ENCODE measurements at regions of chr5 and their contacts with region 1.

Region 1: GRCh38 chr5:177454397-177455035 is 7.9 kb downstream of the PRR7 start:
- DNase-seq: peak; percentile 93
- H3K4me3 Mint-ChIP-seq: peak overlapping the region; percentile 70
- H3K27ac Mint-ChIP-seq: no peak overlapping the region
- H3K4me1 Mint-ChIP-seq: peaks cover 6% of the 10 kb centered on the region
- H3K27me3 Mint-ChIP-seq: no peaks in the 10 kb centered on the region
- CTCF ChIP-seq: peak; percentile 98

Region 2: GRCh38 chr5:176157656-176158055 is 1296.9 kb before region 1 on chr5:
- CTCF ChIA-PET with region 1: no interaction called
- POLR2A ChIA-PET with region 1: no interaction called
- intact Hi-C with region 1: no loop called
- DNase-seq: peak; percentile 74
- H3K4me3 Mint-ChIP-seq: no peak overlapping the region
- H3K27ac Mint-ChIP-seq: peak overlapping the region; percentile 40
- H3K4me1 Mint-ChIP-seq: peaks cover 29% of the 10 kb centered on the region
- H3K27me3 Mint-ChIP-seq: no peaks in the 10 kb centered on the region
- CTCF ChIP-seq: no peak

Region 3: DNA sequence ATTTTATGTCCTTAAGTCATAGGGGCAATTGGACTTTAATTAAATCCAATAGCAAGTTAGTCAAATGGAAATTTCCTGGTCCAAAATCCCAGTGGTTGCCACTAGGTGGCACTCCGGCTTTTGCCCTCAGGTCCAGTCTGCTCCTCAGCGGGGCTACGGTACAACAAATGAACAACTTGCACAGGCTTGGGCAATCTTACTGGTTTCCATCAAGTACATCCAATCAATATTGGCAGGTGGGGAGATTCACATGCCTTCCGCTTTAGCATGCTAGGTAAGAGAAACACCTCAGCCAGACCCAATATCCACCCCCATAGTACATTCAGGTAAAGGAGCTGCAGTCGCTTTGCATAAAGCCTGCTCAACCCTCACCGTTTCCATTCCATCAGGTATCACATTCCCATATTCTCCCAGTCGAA is 136.5 kb before region 1 on chr5:
- CTCF ChIA-PET with region 1: interaction called, 15 read pairs
- POLR2A ChIA-PET with region 1: interaction called, 3 read pairs
- intact Hi-C with region 1: loop called (anchors 1 kb)
- DNase-seq: peak; percentile 85
- H3K4me3 Mint-ChIP-seq: no peak overlapping the region
- H3K27ac Mint-ChIP-seq: no peak overlapping the region
- H3K4me1 Mint-ChIP-seq: no peaks in the 10 kb centered on the region
- H3K27me3 Mint-ChIP-seq: no peaks in the 10 kb centered on the region
- CTCF ChIP-seq: peak; percentile 92

Region 4: DNA sequence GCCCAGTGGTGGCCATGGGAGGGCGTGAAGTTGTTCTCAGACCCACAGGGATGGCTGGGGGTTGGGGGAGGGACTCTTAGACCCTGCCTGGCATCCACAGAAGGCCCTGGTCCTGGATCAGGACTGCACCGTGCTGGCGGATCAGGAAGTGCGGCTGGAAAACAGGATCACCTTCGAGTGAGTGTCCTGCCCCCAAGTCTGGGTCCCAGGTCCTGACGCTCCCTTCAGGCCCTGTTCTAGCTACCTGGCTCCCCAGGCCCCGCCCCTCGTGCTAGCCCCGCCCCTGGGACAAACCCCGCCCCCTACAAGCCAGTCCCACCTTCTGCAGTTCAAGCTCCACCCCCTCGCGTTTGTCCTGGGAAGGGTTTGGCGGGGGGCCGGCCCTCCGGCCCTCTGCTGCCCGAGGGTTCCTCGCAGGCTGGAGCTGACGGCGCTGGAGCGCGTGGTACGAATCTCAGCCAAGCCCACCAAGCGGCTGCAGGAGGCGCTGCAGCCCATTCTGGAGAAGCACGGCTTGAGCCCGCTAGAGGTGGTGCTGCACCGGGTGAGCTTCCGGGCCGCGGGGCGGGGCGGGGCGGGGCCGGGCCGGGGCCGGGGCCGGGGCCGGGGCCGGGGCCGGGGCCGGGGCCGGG is 83.9 kb before region 1 on chr5:
- CTCF ChIA-PET with region 1: interaction called, 12 read pairs
- POLR2A ChIA-PET with region 1: interaction called, 16 read pairs
- intact Hi-C with region 1: no loop called
- DNase-seq: peak; percentile 96
- H3K4me3 Mint-ChIP-seq: peak overlapping the region; percentile 76
- H3K27ac Mint-ChIP-seq: no peak overlapping the region
- H3K4me1 Mint-ChIP-seq: peaks cover 24% of the 10 kb centered on the region
- H3K27me3 Mint-ChIP-seq: no peaks in the 10 kb centered on the region
- CTCF ChIP-seq: peak; percentile 60

Region 5: DNA sequence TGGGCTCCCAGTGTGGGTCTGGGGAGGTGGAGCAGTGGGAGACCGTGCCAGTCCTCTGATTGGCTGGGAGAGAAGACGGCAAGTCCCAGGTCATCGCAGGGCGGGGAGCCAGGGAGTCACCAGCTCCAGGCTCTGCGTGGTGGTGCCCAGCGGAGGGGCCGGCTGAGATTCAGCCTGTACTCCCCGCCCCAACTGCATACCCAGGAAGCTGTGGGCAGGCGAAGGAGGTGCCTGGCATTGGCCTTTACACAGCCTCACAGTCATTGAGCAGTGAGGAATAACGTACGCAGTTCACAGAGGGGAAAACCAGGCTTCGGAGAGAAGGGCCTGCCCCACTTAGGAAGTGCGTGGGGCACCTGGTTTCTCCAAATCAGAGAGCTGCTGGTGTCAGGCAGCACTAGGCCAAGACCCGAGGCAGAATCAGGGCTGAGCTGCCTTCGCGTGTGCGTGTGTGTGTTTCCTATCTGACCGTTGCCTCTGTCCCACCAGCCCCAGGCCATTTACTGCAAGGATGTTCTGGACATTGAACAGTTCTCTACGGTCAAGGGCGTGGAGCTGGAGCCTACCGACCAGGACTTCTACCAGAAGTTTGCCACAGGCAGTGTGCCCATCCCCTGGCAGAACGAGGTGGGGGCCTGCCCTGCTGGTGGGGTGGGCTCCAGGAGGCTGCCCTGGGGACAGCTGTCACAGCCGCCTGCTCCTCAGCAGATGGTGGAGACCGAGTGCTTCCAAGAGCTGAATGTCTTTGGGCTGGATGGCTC is 14.1 kb before region 1 on chr5:
- CTCF ChIA-PET with region 1: interaction called, 54 read pairs
- POLR2A ChIA-PET with region 1: interaction called, 44 read pairs
- intact Hi-C with region 1: no loop called
- DNase-seq: no peak
- H3K4me3 Mint-ChIP-seq: no peak overlapping the region
- H3K27ac Mint-ChIP-seq: no peak overlapping the region
- H3K4me1 Mint-ChIP-seq: peaks cover 17% of the 10 kb centered on the region
- H3K27me3 Mint-ChIP-seq: no peaks in the 10 kb centered on the region
- CTCF ChIP-seq: no peak

Region 6: DNA sequence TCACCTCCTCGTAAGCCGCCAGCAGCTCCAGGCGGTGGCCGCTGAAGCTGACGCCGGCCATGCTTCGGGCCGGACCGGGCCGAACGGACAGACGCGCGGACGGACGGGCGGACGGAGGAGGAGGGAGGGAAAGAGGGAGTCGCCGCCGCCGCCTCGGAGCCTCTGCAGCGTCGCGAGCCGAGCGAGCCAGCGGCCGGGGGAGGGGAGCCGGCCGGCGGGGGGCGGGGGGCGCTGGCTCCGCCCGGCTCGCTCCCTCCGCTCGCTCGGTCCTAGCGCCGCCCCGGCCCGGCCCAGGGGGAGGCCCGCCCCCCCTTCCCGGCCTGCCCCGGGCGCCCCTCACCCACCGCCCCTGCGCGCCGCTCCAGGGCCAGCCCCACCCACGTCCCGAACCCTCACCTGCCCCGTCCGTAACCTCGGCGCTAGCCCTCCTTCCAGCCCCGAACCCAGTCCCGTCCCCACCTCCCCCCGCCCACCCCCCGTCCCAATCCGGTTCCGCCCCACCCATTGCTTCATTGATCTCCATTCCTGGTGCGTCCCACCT is 19.0 kb after region 1 on chr5 and contains the start of gene DBN1:
- CTCF ChIA-PET with region 1: interaction called, 14 read pairs
- POLR2A ChIA-PET with region 1: interaction called, 5 read pairs
- intact Hi-C with region 1: no loop called
- DNase-seq: peak; percentile 56
- H3K4me3 Mint-ChIP-seq: peak within 1 kb of the TSS; percentile 74
- H3K27ac Mint-ChIP-seq: no peak within 1 kb of the TSS
- H3K4me1 Mint-ChIP-seq: peaks cover 55% of the 10 kb centered on the region
- H3K27me3 Mint-ChIP-seq: no peaks in the 10 kb centered on the region
- CTCF ChIP-seq: no peak
- total RNA-seq, gene DBN1: 149 and 165 TPM in 2 replicates

Region 7: DNA sequence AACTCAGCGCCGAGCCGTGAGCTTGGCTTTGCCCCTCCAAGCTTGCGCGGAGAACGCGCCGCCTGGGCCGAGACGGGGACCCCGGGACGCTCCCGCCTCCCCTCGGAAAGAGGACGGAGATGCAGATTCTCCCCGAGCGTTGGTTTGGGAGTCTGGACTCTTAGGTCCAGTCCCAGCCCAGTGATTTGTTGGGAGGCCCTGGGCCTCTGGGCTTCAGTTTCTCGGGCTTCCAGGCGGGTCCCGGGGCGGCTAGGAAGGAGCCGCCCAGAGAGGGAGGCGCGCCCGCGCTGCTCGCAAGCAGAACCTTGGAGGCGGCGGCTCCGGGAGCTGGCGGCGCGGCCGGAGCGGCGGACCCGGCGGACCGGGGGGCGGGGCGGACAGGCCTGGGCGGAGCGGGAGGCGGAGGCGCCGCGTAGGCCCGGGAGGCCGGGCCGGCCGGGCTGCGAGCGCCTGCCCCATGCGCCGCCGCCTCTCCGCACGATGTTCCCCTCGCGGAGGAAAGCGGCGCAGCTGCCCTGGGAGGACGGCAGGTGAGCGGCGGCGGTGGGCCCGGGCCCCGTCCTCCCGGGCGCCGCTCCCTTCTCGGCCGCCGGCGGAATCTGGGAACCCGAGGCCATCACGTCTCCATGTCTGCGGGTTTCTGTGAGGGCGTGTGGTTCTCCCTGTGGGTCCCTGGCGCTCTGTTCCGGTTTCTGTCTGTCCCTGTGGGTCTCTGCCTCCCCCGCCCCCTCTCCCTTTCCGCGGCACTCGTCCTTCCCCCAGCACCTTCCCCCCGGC is 145.4 kb after region 1 on chr5 and contains the start of gene B4GALT7:
- CTCF ChIA-PET with region 1: no interaction called
- POLR2A ChIA-PET with region 1: no interaction called
- intact Hi-C with region 1: no loop called
- DNase-seq: peak; percentile 85
- H3K4me3 Mint-ChIP-seq: peak within 1 kb of the TSS; percentile 85
- H3K27ac Mint-ChIP-seq: peak within 1 kb of the TSS; percentile 93
- H3K4me1 Mint-ChIP-seq: peaks cover 35% of the 10 kb centered on the region
- H3K27me3 Mint-ChIP-seq: no peaks in the 10 kb centered on the region
- CTCF ChIP-seq: no peak
- total RNA-seq, gene B4GALT7: 37.9 and 38.8 TPM in 2 replicates

Measured in MCF 10A (cell line).